ENCODE measurements at regions of chr2 and their contacts with region 1.

Region 1: DNA sequence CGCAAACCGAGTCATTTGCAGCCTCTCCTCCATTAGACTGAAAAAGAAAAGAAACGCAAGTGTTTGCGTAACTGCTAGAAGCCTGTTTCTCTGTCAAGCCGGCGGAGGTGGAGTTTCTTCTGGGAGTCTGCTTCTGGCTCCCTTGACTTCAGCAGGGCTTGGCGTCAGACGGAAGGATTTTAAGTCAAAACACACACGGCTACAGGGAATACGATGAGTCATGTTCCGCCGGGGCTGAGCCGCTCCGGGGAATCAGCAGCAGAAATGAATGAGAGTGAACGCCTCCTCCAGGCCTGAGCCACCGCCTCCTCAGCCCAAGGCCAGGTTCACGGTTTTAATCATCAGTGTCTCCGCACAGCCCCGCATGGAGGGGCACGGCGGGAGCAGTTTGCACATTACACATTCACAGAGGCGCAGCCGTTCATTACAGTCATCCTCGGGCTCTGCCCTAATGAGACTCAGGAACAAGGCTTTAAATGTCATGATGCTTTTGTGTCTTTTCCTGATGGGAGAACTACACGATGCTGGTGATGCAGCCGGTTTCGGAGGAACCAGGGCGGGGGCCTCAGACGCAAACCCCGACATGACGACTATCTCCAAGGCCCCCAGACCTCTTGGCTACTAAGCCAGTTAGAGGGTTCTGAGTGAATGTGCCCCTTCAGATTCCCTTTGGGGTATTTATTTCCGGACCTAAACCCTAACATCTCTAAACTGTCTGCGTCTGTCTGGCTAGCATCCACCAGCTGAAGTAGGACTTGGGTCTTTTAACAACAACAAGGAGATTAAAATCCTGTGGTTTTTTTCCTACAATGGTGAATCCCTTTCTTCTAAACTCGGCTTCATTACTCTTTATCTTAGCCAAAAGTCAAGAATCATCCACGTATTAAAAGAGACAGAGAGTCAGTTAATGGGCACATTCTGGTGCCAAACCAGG is 11.1 kb upstream of the SCG2 start:
- DNase-seq: peak; percentile 98
- H3K4me3 ChIP-seq: peak overlapping the region; percentile 39
- H3K27ac ChIP-seq: peak overlapping the region; percentile 69
- H3K4me1 ChIP-seq: peaks cover 38% of the 10 kb centered on the region
- H3K27me3 ChIP-seq: no peaks in the 10 kb centered on the region
- CTCF ChIP-seq: no peak

Region 2: GRCh38 chr2:223459328-223459939 is 153.8 kb before region 1 on chr2:
- CTCF ChIA-PET with region 1: interaction called, 3 read pairs
- POLR2A ChIA-PET with region 1: no interaction called
- intact Hi-C with region 1: loop called (anchors 5 kb)
- DNase-seq: peak; percentile 59
- H3K4me3 ChIP-seq: no peak overlapping the region
- H3K27ac ChIP-seq: no peak overlapping the region
- H3K4me1 ChIP-seq: peaks cover 11% of the 10 kb centered on the region
- H3K27me3 ChIP-seq: no peaks in the 10 kb centered on the region
- CTCF ChIP-seq: peak; percentile 65

Region 3: GRCh38 chr2:223598994-223599639 is 14.2 kb before region 1 on chr2:
- CTCF ChIA-PET with region 1: no interaction called
- POLR2A ChIA-PET with region 1: no interaction called
- intact Hi-C with region 1: no loop called
- DNase-seq: no peak
- H3K4me3 ChIP-seq: no peak overlapping the region
- H3K27ac ChIP-seq: no peak overlapping the region
- H3K4me1 ChIP-seq: peaks cover 9% of the 10 kb centered on the region
- H3K27me3 ChIP-seq: no peaks in the 10 kb centered on the region
- CTCF ChIP-seq: no peak